Activated B cell treated with CpG ODN at 0.5 μM for 24 hours (primary cell): ENCODE measurements at regions of chr7 and their contacts with region 1.

Region 1: GRCh38 chr7:55497521-55497920 is 74.8 kb downstream of the VOPP1 start:
- DNase-seq: no peak
- ATAC-seq: no peak
- H3K4me3 Mint-ChIP-seq: no peak overlapping the region
- H3K27ac Mint-ChIP-seq: peak overlapping the region; percentile 35
- H3K4me1 Mint-ChIP-seq: peaks cover 30% of the 10 kb centered on the region
- H3K27me3 Mint-ChIP-seq: no peaks in the 10 kb centered on the region
- CTCF ChIP-seq: no peak

Region 2: DNA sequence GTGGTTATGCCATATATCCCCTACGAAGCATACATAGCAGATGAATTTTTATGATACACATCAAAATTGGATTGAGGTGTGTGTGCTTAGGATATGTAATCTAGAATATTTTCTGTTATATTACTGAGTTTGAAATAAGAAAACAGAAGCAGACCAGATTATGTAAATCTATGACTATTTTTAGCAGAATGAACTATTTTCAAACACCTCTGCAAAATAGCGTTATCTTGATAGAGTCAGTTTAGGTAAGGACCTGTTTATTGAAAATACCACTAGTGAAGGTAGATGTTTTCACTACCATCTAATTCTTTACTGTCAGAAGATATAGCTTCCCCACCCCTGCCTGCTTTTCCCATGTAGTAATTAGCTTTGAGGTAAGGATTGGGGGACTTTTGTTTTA is 123.3 kb before region 1 on chr7:
- CTCF ChIA-PET with region 1: no interaction called
- POLR2A ChIA-PET with region 1: no interaction called
- intact Hi-C with region 1: no loop called
- DNase-seq: no peak
- ATAC-seq: no peak
- H3K4me3 Mint-ChIP-seq: no peak overlapping the region
- H3K27ac Mint-ChIP-seq: no peak overlapping the region
- H3K4me1 Mint-ChIP-seq: peaks cover 9% of the 10 kb centered on the region
- H3K27me3 Mint-ChIP-seq: no peaks in the 10 kb centered on the region
- CTCF ChIP-seq: no peak

Region 3: DNA sequence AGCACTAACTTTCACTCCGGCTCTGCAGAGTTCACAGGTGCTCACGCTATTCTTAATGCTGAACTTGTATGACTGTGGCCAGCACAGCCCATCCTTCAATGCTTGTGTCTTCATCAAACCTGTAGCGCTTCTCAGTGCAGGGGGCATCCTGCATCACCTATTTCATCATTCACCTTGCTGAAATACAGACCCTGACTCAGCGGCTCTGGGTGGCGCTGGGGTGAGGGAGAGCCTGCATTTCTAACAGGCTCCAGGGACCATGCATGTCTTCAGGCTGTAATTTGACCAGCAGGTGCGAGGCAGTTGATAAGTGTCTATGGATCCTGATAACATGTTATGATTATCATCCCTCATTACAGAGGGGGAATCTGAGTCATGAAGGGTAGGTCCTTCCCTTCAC is 14.5 kb before region 1 on chr7:
- CTCF ChIA-PET with region 1: no interaction called
- POLR2A ChIA-PET with region 1: interaction called, 13 read pairs
- intact Hi-C with region 1: no loop called
- DNase-seq: no peak
- ATAC-seq: no peak
- H3K4me3 Mint-ChIP-seq: no peak overlapping the region
- H3K27ac Mint-ChIP-seq: peak overlapping the region; percentile 2
- H3K4me1 Mint-ChIP-seq: peaks cover 22% of the 10 kb centered on the region
- H3K27me3 Mint-ChIP-seq: no peaks in the 10 kb centered on the region
- CTCF ChIP-seq: no peak